ENCODE measurements at regions of chr1 and their contacts with region 1.

Region 1: GRCh38 chr1:116397728-116398127 is 24.7 kb downstream of the ATP1A1 start:
- DNase-seq: no peak
- ATAC-seq: no peak
- H3K4me3 ChIP-seq: no peak overlapping the region
- H3K4me3 Mint-ChIP-seq: no peak overlapping the region
- H3K27ac ChIP-seq: no peak overlapping the region
- H3K27ac Mint-ChIP-seq: peak overlapping the region; percentile 56
- H3K4me1 ChIP-seq: peaks cover 8% of the 10 kb centered on the region
- H3K4me1 Mint-ChIP-seq: peaks cover 32% of the 10 kb centered on the region
- H3K27me3 ChIP-seq: no peaks in the 10 kb centered on the region
- H3K27me3 Mint-ChIP-seq: no peaks in the 10 kb centered on the region
- CTCF ChIP-seq: no peak

Region 2: DNA sequence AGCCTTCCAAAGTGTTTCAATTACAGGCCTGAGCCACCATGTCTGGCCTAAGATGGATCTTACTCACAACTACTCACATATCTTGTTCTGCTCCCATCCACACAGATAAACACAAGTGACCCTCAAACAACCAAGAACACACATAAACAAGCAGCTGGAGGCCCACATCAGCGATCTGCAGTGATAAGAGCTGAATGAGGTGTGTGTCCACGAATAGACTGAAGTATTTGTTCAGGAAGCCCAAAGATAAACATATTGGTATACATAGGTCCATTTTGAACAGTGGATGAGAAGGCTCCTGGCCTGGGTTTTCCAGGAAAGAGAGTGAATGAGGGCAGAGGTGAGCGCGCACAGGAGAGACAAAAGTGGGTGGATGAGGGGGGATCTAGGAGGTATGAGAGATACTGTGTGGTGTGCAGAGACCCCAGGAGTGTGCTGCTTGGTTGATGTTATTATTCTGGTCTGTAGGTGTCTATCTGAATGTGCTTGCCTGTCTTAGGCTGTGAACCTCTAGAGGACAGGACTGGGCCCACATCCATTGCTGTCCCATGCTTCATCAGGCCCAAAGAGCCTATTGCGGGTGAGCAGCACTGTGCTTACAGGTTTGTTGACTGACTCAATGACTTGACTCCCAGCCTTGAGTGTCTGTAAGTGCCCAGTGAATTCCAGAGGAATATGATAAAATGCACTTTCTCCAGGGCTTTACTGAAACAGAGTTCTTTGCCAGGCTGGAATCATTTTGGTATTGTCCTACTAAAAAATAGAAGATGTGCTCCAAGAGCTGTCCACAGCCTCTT is 104.6 kb before region 1 on chr1:
- CTCF ChIA-PET with region 1: no interaction called
- POLR2A ChIA-PET with region 1: no interaction called
- intact Hi-C with region 1: no loop called
- DNase-seq: no peak
- ATAC-seq: no peak
- H3K4me3 ChIP-seq: no peak overlapping the region
- H3K4me3 Mint-ChIP-seq: no peak overlapping the region
- H3K27ac ChIP-seq: no peak overlapping the region
- H3K27ac Mint-ChIP-seq: no peak overlapping the region
- H3K4me1 ChIP-seq: no peaks in the 10 kb centered on the region
- H3K4me1 Mint-ChIP-seq: peaks cover 10% of the 10 kb centered on the region
- H3K27me3 ChIP-seq: no peaks in the 10 kb centered on the region
- H3K27me3 Mint-ChIP-seq: no peaks in the 10 kb centered on the region
- CTCF ChIP-seq: no peak

Region 3: GRCh38 chr1:116360429-116361173 is 37.1 kb before region 1 on chr1:
- CTCF ChIA-PET with region 1: no interaction called
- POLR2A ChIA-PET with region 1: no interaction called
- intact Hi-C with region 1: no loop called
- DNase-seq: peak in 3 of 14 experiments; percentile 55 to 62 (median 57)
- ATAC-seq: no peak
- H3K4me3 ChIP-seq: no peak overlapping the region
- H3K4me3 Mint-ChIP-seq: no peak overlapping the region
- H3K27ac ChIP-seq: no peak overlapping the region
- H3K27ac Mint-ChIP-seq: no peak overlapping the region
- H3K4me1 ChIP-seq: no peaks in the 10 kb centered on the region
- H3K4me1 Mint-ChIP-seq: peaks cover 44% of the 10 kb centered on the region
- H3K27me3 ChIP-seq: no peaks in the 10 kb centered on the region
- H3K27me3 Mint-ChIP-seq: no peaks in the 10 kb centered on the region
- CTCF ChIP-seq: peak; percentile 38

Region 4: GRCh38 chr1:116474921-116475849 is 77.5 kb after region 1 on chr1:
- CTCF ChIA-PET with region 1: no interaction called
- POLR2A ChIA-PET with region 1: no interaction called
- intact Hi-C with region 1: loop called in 1 of 2 experiments (anchors 5 kb)
- DNase-seq: no peak
- ATAC-seq: no peak
- H3K4me3 ChIP-seq: no peak overlapping the region
- H3K4me3 Mint-ChIP-seq: no peak overlapping the region
- H3K27ac ChIP-seq: no peak overlapping the region
- H3K27ac Mint-ChIP-seq: no peak overlapping the region
- H3K4me1 ChIP-seq: no peaks in the 10 kb centered on the region
- H3K4me1 Mint-ChIP-seq: no peaks in the 10 kb centered on the region
- H3K27me3 ChIP-seq: no peaks in the 10 kb centered on the region
- H3K27me3 Mint-ChIP-seq: no peaks in the 10 kb centered on the region
- CTCF ChIP-seq: no peak